HepG2 (cell line): ENCODE measurements at regions of chr11 and their contacts with region 1.

Region 1: GRCh38 chr11:92975285-92975684 is 5.8 kb downstream of the MTNR1B start:
- DNase-seq: peak; percentile 34
- ATAC-seq: peak; percentile 91
- H3K4me3 ChIP-seq: no peak overlapping the region
- H3K27ac ChIP-seq: no peak overlapping the region
- H3K4me1 ChIP-seq: peaks cover 13% of the 10 kb centered on the region
- H3K27me3 ChIP-seq: peaks cover 0 to 10% of the 10 kb centered on the region in 2 experiments; a peak in 1 of 5 replicates
- CTCF ChIP-seq: no peak
- EP300 ChIP-seq: 0 out of 4 replicates have a peak, but pooled peaks of 1 of the 2 experiments have one; percentile 15
- POLR2A ChIP-seq: no peak
- RAD21 ChIP-seq: no peak

Region 2: GRCh38 chr11:92892802-92893684 is 82.2 kb before region 1 on chr11:
- CTCF ChIA-PET with region 1: no interaction called
- POLR2A ChIA-PET with region 1: no interaction called
- in situ Hi-C with region 1: no loop called
- intact Hi-C with region 1: no loop called
- DNase-seq: no peak
- ATAC-seq: no peak
- H3K4me3 ChIP-seq: no peak overlapping the region
- H3K27ac ChIP-seq: no peak overlapping the region
- H3K4me1 ChIP-seq: no peaks in the 10 kb centered on the region
- H3K27me3 ChIP-seq: no peaks in the 10 kb centered on the region
- CTCF ChIP-seq: no peak
- EP300 ChIP-seq: no peak
- POLR2A ChIP-seq: no peak
- RAD21 ChIP-seq: no peak

Region 3: DNA sequence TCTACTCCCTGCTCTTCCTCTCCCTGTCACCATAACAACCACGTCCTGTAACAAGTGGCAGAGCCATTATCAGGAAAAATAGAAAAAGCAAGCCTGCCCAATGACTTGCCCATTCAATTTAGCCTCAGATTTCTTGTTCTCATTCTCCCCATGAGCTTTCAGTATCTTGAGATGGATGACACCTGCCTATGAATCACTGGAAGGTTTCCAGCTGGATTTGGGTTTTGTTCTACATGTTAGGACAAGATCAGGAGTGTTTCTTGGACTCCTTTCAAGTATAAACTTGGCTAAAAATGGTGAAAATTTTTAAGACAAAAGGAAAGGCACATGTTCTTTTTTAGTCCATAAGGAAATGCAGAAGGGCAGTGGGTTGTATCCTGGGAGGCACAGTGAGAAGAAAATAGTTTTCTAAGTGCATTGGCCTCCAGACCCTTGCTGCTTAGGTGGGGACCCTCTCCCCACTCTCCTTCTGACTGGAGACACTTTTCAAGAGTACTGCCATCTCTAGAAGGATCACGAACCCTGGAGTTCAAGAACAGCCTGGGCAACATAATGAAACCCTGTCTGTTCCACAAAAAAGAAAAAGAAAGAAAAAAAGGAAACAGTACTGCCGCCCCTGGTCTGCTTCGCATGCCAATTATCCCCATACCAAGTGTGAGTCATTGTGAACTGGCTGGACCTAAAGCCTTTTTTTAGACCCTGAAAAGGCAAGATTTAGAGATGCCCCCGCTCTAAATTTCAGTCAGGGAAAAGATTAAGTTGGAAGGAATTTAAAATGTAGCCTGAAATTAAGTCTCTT is 45.2 kb after region 1 on chr11:
- CTCF ChIA-PET with region 1: no interaction called
- POLR2A ChIA-PET with region 1: no interaction called
- in situ Hi-C with region 1: no loop called
- intact Hi-C with region 1: loop called (anchors 1 kb)
- DNase-seq: no peak
- ATAC-seq: no peak
- H3K4me3 ChIP-seq: no peak overlapping the region
- H3K27ac ChIP-seq: no peak overlapping the region
- H3K4me1 ChIP-seq: no peaks in the 10 kb centered on the region
- H3K27me3 ChIP-seq: no peaks in the 10 kb centered on the region; a peak in 1 of 5 replicates
- CTCF ChIP-seq: no peak
- EP300 ChIP-seq: no peak
- POLR2A ChIP-seq: no peak
- RAD21 ChIP-seq: no peak